ENCODE measurements at regions of chr16 and their contacts with region 1.

Region 1: DNA sequence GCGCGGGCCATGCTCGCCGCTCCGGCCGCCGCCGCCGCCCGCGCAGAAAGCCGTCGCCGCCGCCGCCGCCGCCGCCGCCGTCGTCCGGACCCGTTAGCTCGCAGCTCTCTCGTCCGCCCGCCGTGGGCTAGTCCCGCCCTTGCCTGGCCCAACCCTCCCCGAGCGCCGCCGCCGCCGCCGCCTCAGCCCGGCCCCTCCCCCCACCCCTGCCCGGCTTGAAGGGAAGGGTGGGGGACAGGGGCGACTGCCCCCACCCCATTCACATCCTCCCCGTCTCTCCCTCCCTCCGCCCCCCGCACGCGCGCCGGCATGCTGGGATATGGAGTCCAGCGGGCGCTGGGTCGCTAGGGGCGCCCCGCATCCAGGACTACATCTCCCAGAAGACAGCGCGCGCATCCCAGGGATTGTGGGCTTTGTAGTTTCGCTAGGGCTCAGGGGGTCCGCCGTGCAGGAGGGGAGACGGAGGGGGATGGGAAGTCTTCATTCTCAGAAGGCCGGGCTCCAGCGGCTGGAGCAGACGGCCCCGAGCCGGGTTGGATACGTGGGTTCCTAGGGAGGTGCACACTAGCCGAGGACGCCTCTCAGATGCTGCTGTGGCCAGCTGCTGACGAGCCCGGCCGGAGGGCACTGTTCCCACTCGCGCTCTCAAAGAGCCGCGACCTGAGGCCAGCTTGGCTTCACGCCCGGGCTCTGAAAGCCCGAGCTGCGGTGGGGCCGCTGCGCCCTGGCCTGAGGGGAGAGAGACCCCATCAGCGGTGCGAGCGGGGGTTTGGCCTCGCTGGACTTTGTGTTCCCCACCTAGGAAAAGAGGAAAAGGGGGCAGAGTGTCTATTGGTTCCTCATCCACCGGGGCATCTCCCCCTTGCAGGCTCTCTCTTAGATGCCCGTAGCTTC is at the start of gene ST3GAL2:
- DNase-seq: peak; percentile 97
- ATAC-seq: peak; percentile 99
- H3K4me3 ChIP-seq: peak within 1 kb of the TSS; percentile 78
- H3K27ac ChIP-seq: peak within 1 kb of the TSS; percentile 80
- H3K4me1 ChIP-seq: peaks cover 34% of the 10 kb centered on the region
- H3K27me3 ChIP-seq: no peaks in the 10 kb centered on the region
- CTCF ChIP-seq: no peak
- total RNA-seq, gene ST3GAL2: 30.9 TPM

Region 2: DNA sequence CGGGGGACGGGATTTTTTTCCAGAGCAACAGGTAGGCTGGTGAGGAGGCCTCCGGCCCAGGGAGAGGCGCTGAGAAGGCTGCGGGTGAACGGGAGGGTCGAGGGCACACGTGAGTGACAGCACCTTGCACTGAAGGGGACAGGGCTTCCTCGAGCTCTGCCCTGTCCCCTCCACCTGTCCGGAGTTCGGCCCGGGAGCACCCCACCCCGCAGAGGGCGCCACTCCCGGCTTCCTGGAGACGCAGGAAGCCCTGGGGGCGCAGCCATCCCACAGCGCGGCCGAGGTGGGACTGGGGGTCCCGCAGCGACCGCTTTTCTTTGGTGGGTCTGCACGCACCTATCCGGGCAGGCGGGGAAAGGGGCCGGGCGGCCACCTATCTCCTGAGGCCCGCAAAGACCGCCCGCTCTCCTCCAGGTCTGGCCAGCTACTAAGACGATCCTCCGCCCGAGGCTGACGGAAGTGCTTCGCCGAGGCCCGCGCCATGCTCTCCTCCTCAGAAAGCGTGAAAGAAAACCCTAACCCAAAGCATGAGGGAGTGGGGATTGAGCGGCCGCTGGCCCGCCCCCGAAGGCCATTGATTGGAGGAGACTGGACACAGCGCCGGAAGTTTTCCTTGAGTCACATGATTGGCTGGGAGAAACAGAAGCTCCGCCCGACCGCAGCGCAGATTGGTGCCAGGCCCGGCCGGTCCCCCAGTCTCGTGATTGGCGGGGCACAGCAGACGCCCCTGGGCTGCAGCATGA is 58.2 kb before region 1 on chr16:
- intact Hi-C with region 1: loop called (anchors 10 kb)
- DNase-seq: peak; percentile 98
- ATAC-seq: peak; percentile 97
- H3K4me3 ChIP-seq: peak overlapping the region; percentile 76
- H3K27ac ChIP-seq: peak overlapping the region; percentile 90
- H3K4me1 ChIP-seq: peaks cover 18% of the 10 kb centered on the region
- H3K27me3 ChIP-seq: no peaks in the 10 kb centered on the region
- CTCF ChIP-seq: peak; percentile 32